WTC11 (cell line): ENCODE measurements at regions of chr10 and their contacts with region 1.

Region 1: GRCh38 chr10:93115661-93116383 is 42.1 kb downstream of the CYP26A1 start:
- DNase-seq: peak; percentile 88
- ATAC-seq: peak; percentile 93
- H3K4me3 Mint-ChIP-seq: no peak overlapping the region
- H3K27ac Mint-ChIP-seq: no peak overlapping the region
- H3K4me1 Mint-ChIP-seq: peaks cover 12% of the 10 kb centered on the region
- H3K27me3 Mint-ChIP-seq: peaks cover 15% of the 10 kb centered on the region
- CTCF ChIP-seq: peak; percentile 47; the same call in 1 of the 2 replicates

Region 2: DNA sequence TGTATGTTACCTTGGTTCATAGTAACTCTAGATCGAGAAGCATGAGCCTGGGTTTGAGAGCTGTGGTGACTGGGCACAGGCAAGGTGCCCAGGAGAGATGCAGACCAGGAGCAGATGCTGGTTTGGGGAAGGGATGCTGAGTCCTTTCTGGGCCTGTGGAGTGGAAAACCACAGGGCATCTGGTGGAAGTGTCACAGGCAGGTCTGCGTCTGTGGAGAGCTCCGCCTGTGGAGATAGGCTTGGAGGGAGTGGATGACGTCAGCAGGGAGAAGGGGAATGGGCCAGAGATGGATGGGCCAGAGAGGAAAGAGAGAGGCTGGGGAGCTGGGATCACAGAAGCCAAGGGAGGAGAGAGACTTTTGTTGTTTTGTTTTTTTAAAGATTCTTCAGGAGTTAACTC is 27.4 kb before region 1 on chr10:
- CTCF ChIA-PET with region 1: interaction called, 11 read pairs
- POLR2A ChIA-PET with region 1: no interaction called
- DNase-seq: no peak
- ATAC-seq: no peak
- H3K4me3 Mint-ChIP-seq: no peak overlapping the region
- H3K27ac Mint-ChIP-seq: peak overlapping the region; percentile 22
- H3K4me1 Mint-ChIP-seq: peaks cover 29% of the 10 kb centered on the region
- H3K27me3 Mint-ChIP-seq: peaks cover 6% of the 10 kb centered on the region
- CTCF ChIP-seq: no peak

Region 3: GRCh38 chr10:93138113-93138870 is 22.5 kb after region 1 on chr10:
- CTCF ChIA-PET with region 1: interaction called, 14 read pairs
- POLR2A ChIA-PET with region 1: no interaction called
- DNase-seq: no peak
- ATAC-seq: no peak
- H3K4me3 Mint-ChIP-seq: no peak overlapping the region
- H3K27ac Mint-ChIP-seq: no peak overlapping the region
- H3K4me1 Mint-ChIP-seq: no peaks in the 10 kb centered on the region
- H3K27me3 Mint-ChIP-seq: no peaks in the 10 kb centered on the region; the same call in 1 of the 2 replicates
- CTCF ChIP-seq: no peak

Region 4: DNA sequence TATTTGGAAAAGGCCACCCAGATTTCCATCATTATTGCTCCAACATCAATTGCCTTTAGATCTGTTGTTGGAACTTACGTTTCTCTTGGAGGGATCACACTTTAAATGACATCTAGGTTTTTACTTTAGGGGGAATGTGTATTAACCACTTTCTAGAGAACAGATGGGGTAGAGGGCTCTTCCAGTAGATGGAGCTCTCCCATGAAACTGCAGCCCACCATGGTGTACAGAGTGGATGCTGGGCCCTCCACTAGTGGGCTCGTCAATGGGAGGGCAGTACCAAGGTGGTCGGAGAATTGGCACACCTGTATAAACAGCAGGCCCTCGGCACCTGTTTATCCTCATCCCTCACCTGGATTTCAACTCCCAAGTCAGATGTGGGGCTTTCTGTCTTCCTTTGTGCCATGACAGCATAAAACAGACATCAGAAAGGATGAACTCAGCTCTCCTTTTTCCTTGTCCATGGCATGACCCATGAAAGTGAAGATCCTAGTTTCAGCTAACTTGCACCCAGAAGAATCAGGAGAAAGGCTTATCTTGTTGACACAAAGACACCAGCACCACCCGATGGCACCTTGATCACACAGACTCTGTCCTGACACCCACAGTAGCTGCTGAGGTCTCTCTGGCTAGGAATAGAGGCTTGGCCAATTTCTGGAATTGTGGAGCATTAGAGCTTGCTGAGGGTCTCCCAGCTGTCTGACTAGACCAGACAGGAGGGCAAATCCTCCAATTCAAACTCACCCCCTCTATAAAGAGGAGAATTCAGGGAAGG is 108.4 kb after region 1 on chr10:
- CTCF ChIA-PET with region 1: interaction called, 20 read pairs
- POLR2A ChIA-PET with region 1: no interaction called
- DNase-seq: no peak
- ATAC-seq: peak; percentile 39
- H3K4me3 Mint-ChIP-seq: no peak overlapping the region
- H3K27ac Mint-ChIP-seq: no peak overlapping the region
- H3K4me1 Mint-ChIP-seq: peaks cover 17% of the 10 kb centered on the region
- H3K27me3 Mint-ChIP-seq: peaks cover 22% of the 10 kb centered on the region
- CTCF ChIP-seq: no peak

Region 5: GRCh38 chr10:93288654-93289634 is 173.1 kb after region 1 on chr10:
- CTCF ChIA-PET with region 1: interaction called, 24 read pairs
- POLR2A ChIA-PET with region 1: no interaction called
- DNase-seq: peak; percentile 89
- ATAC-seq: peak; percentile 90
- H3K4me3 Mint-ChIP-seq: no peak overlapping the region
- H3K27ac Mint-ChIP-seq: peak overlapping the region; percentile 100
- H3K4me1 Mint-ChIP-seq: peaks cover 54% of the 10 kb centered on the region
- H3K27me3 Mint-ChIP-seq: peaks cover 33% of the 10 kb centered on the region
- CTCF ChIP-seq: peak; percentile 79